Common myeloid progenitor, CD34-positive (primary cell): ENCODE measurements at regions of chr7 and their contacts with region 1.

Region 1: DNA sequence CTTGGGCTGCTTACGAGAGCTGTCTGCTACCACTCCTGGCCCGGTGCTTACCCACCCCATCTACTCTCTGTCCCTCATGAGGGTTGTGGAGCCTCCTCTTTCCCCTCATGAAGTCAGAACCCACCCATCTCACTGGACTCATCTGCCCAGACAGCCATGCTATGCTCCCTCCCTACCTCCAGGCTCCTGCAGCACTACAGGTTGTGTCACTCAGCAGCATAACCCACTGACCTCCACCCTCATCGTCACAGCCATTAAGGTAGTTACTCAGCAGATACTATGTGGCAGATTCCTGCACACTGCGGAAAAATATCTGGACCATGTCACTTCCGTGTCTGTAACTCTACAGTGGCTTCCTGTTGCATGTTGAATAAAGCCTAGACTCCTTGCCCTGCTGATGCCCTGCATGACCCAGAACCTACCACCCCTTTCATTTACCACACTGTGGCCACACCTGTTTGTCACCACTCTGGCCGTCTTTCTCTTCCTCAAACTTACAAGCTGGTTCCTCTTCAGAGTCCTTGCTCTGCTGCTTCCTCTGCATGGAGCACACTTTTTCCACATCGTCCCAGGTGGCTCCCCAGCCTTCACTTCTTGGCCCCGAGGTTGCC is 2.1 kb downstream of the DBNL start:
- DNase-seq: peak; percentile 29 to 85 (median 79)
- H3K4me3 ChIP-seq: peak overlapping the region in 3 of 7 experiments; percentile 1 to 89 (median 21)
- H3K27ac ChIP-seq: peak overlapping the region in 1 of 2 experiments; percentile 87
- H3K4me1 ChIP-seq: peaks cover 19 to 36% (median 28%) of the 10 kb centered on the region in 4 experiments
- H3K27me3 ChIP-seq: no peaks in the 10 kb centered on the region

Region 2: GRCh38 chr7:43834463-43835251 is 211.9 kb before region 1 on chr7:
- CTCF ChIA-PET with region 1: no interaction called
- POLR2A ChIA-PET with region 1: no interaction called
- DNase-seq: peak; percentile 58 to 85 (median 82)
- H3K4me3 ChIP-seq: peak overlapping the region in 6 of 7 experiments; percentile 10 to 61 (median 35)
- H3K27ac ChIP-seq: no peak overlapping the region
- H3K4me1 ChIP-seq: peaks cover 0 to 7% (median 2%) of the 10 kb centered on the region in 4 experiments
- H3K27me3 ChIP-seq: peaks cover 0 to 2% (median 0%) of the 10 kb centered on the region in 5 experiments

Region 3: DNA sequence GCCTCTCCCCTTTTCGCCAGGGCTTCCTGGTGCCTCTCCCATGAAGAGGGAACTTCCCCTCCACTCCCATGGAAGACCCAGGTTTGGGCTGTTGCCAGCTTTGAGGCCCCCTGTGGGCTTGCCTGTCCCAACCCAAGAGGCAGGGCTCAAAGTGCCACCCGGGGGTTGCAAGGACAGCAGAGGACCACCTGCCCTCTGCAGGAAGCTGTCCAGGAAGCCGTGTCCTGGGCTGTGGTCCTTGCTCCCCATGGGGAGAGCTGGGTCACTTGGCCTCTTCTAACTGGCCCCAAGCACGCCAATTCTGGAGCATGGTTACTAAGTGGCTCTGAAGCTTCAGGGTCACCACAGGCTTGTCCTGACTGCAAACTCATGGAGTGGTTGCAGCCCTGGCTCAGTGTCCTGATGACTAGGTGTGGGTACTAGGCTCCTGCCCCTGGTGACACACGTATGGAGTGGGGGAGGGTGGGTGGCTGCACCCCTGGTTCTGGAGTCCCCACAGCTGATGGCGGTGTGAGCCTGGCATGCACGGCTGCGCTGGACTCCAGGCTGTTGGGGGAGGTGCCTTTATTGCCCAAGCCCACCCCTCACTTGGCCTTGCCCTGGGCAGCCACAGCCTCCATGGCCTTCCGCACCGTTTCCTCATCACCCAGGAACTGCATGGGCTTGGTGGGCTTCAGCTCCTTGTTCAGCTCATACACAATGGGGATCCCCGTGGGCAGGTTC is 15.8 kb after region 1 on chr7:
- CTCF ChIA-PET with region 1: interaction called, 11 read pairs
- POLR2A ChIA-PET with region 1: interaction called, 4 read pairs
- DNase-seq: no peak
- H3K4me3 ChIP-seq: no peak overlapping the region
- H3K27ac ChIP-seq: no peak overlapping the region
- H3K4me1 ChIP-seq: peaks cover 0 to 16% (median 11%) of the 10 kb centered on the region in 4 experiments
- H3K27me3 ChIP-seq: peaks cover 0 to 13% (median 8%) of the 10 kb centered on the region in 5 experiments

Region 4: GRCh38 chr7:44147031-44147991 is 100.8 kb after region 1 on chr7:
- CTCF ChIA-PET with region 1: no interaction called
- POLR2A ChIA-PET with region 1: no interaction called
- DNase-seq: no peak
- H3K4me3 ChIP-seq: no peak overlapping the region
- H3K27ac ChIP-seq: no peak overlapping the region
- H3K4me1 ChIP-seq: peaks cover 0 to 15% (median 11%) of the 10 kb centered on the region in 4 experiments
- H3K27me3 ChIP-seq: peaks cover 0 to 39% (median 19%) of the 10 kb centered on the region in 5 experiments

Region 5: DNA sequence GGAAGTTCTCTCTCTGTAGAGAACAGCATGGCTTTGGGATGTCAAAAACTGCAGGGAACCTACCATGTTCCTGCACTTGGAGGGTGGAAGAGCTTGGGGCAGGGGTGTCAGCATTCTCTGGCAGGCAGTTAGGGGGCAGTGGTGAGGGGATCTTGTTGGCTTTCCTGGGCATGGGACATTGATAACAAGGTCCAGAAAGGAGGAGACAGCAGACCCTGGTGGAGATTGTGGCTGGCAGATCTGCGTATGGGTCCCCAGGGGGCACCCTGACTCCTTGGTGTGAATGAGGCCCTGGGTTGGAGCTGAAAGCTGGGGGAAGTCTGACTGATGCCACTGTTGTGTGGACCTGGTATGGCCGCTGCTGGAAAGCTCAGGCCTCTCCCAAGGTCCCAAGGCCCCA is 301.7 kb after region 1 on chr7:
- CTCF ChIA-PET with region 1: no interaction called
- POLR2A ChIA-PET with region 1: no interaction called
- DNase-seq: peak; percentile 37 to 55 (median 52)
- H3K4me3 ChIP-seq: no peak overlapping the region
- H3K27ac ChIP-seq: no peak overlapping the region
- H3K4me1 ChIP-seq: no peaks in the 10 kb centered on the region
- H3K27me3 ChIP-seq: peaks cover 0 to 4% (median 0%) of the 10 kb centered on the region in 5 experiments